Testis (tissue), 5 donors: ENCODE measurements at regions of chr1 and their contacts with region 1.

Region 1: DNA sequence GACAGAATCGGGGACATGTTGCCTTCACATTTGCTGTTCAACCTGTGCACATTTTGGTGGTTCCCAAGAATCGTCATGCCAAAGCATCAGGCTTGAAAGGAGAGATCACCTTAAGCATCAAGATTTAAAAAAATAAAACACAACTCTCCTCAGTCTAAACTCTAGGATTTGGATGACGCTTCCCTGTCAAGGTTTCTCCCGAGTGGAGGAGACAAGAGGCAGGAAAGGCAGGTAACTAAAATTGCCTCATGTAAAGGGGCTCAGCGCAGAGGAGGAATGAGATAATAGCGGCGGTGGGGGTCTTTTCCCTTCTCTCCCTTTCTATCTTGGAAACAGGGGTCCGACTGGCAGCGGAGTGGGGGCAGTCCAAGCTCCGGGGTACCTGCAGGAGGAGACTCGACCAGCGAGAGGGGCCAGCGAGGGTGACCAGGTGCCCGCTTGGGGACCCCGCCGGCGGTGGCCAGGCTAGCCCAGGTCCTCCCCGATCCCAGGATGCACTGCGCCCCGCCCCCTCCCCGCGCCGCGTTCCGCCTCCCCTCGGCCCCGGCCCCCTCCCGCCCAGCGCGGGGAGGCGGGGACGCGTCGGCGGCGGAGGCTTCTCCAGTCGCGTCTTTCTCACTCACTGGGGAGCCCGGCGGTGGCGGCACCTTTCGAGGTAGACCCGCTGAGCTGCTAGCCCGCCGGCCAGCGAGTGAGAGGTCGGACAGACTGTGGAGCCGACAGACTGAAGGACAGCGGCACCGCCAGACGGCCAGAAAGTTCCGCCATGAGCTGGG is at the start of gene FNBP1L:
- DNase-seq: peak; percentile 85
- H3K4me3 ChIP-seq: peak within 1 kb of the TSS; percentile 61 to 79
- H3K27ac ChIP-seq: peak within 1 kb of the TSS; percentile 79 to 81
- H3K4me1 ChIP-seq: no peaks in the 10 kb centered on the region
- H3K27me3 ChIP-seq: no peaks in the 10 kb centered on the region
- CTCF ChIP-seq: no peak
- POLR2A ChIP-seq: no peak
- total RNA-seq, gene FNBP1L: 46.5 to 54.4 TPM

Region 2: DNA sequence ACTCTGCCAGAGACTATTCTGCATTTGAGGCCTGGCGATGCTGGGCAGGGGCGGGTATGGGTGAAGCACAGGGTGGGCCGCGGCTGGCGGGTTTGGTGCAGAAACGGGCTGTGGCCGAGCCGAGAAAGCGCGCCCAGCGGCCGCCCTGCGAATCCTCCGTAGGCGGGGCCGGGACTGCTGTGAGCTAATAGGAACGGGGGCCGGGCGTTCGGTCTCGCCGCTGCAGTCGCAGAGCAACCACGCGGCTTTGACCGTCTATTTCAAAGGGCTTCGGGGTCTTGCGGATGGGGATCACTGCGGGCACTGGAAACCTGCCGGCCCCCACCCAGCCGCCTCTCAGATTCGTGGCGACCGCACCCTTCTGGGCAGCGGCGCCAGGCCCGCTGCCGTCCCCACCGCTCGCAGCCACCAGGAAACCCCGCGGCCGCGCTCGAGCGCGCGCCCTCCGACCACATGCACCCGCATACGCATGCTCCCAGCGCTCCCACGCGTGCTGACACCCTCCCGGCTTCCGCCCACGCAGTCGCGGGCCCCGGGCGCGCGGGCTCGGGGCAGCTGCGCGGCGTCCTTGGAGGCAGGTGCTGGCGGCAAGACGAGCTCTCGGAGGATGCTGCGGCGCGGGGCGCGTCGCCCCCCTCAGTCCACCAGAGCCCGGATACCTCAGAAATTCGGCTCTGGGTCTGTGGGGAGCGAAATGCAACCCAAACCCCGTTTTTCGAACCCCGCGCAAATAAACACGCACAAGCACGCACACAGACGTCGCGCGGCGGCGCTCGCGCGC is 398.7 kb after region 1 on chr1:
- intact Hi-C with region 1: loop called (anchors 10 kb)
- DNase-seq: peak; percentile 93
- H3K4me3 ChIP-seq: peak overlapping the region; percentile 79 to 93
- H3K27ac ChIP-seq: peak overlapping the region; percentile 95 to 99
- H3K4me1 ChIP-seq: peaks cover 44% of the 10 kb centered on the region
- H3K27me3 ChIP-seq: no peaks in the 10 kb centered on the region
- CTCF ChIP-seq: peak; percentile 20 to 46 (median 35)
- POLR2A ChIP-seq: no peak